ENCODE measurements at regions of chr5 and their contacts with region 1.

Region 1: DNA sequence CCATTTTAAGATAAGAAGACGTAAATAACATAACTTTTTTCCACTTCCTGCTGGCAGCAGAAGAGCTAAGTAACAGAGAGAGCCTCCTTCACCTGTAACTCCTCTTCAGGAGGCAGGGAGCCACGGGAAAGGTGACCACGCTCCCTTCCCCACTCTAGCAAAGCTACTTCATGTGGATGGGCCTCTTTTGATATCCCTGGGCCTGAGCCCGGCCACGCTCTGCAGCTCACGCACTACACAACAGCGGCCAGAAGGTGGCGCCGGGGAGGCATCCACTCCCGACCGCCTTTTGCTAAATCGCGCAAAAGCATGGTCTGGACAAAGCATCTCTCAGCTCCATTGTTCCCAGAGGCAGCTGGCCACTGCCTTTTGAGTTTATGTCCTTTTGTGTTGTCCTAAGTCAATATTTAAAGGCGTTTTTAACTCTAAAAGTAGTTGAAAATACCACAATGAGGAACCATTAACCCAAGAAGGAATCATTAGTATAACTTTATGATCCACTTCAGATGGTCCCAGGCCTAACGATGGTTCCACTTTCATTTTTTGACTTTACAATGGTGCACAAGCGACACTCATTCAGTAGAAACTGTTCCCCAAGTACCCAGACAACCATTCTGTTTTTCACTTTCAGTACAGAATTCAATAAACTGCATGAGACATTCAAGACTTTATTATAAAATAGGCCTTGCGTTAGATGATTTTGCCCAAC is 23.6 kb downstream of the CMBL start:
- DNase-seq: peak; percentile 85
- CTCF ChIP-seq: peak; percentile 92

Region 2: DNA sequence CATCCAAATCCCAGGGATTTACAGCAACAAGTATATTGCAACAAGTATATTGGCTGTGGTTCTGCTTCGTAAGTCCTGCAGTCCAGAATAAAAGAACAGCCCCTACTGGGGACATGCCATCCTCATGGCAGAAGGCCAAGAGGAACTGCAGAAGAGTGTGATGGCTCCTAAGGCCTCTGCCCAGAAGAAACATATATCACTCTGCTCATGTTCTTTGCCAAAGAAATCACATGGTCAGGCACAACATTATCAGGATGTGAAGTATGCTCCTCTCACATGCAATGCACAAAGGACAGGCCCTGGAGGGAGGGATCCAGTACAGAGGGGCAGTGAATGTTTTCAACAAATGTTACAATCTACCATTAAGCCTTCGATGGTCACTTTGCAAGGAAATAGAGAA is 494.3 kb before region 1 on chr5:
- CTCF ChIA-PET with region 1: no interaction called
- POLR2A ChIA-PET with region 1: no interaction called
- DNase-seq: no peak
- CTCF ChIP-seq: no peak

Region 3: GRCh38 chr5:10229306-10230048 is 54.6 kb before region 1 on chr5:
- CTCF ChIA-PET with region 1: no interaction called
- POLR2A ChIA-PET with region 1: no interaction called
- DNase-seq: no peak
- CTCF ChIP-seq: no peak

Region 4: DNA sequence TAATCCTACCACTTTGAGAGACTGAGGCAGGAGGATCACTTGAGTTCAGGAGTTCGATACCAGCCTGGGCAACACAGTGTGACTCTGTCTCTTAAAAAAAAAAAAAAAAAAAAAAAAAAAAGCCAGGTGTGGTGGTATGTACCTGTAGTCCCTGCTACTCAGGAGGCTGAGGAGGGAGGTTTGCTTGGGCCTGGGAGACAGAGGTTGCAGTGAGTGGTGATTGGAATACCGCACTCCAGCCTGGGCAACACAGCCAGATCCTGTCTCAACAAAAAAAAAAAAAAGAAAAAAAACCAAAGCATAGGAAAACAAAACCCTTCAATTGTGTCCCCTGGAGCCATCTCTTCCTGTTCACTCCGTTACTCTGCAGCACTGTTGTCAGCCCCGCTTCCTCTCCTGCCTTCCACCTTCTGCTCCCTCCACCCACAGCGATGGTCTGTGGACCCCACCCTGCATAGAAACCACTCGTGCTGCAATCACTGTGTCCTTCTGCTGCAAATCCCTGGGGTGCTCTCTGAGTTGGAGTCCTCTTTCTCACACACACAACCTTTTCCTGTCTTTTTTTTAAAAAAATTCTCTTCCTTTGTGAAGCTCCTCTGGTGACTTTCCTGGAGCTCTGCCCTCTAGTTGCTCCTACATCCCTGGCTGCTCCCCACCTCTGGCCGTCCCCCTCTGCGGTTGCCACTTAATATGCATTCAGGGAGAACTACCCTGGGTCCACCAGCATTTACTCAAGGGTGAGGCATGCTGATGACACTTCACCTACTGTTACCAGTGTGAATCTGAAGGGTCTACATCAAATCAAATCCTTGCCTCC is 11.8 kb before region 1 on chr5:
- CTCF ChIA-PET with region 1: interaction called, 12 read pairs
- POLR2A ChIA-PET with region 1: no interaction called
- DNase-seq: no peak
- CTCF ChIP-seq: no peak

Region 5: GRCh38 chr5:10301842-10302610 is 17.9 kb after region 1 on chr5:
- CTCF ChIA-PET with region 1: interaction called, 18 read pairs
- POLR2A ChIA-PET with region 1: no interaction called
- DNase-seq: no peak
- CTCF ChIP-seq: no peak

Region 6: DNA sequence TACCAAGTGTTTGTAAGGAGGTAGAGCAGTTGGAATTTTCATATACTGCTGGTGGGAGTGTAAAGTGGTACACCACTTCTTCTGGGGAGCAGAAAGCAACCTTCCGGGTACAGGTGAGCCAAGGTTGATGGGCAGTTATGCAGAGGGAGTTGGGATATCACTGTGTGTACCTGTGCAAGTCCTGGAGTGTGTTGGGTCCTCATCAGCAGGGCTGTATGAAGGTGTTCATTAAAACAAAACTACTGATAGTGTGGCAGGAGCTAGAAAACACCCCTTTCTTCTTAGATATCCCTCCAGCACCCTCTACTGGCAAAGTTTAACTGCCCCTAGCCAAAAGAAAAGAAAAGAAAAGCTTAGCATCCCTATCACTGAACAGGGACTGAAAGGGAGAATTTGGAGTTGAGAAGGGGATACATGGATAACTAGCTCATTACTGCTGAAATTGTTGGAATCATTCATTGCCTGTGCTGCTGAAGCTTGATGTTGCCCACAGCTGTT is 80.2 kb after region 1 on chr5:
- CTCF ChIA-PET with region 1: interaction called, 16 read pairs
- POLR2A ChIA-PET with region 1: no interaction called
- DNase-seq: no peak
- CTCF ChIP-seq: no peak